ENCODE measurements at regions of chr3 and their contacts with region 1.

Region 1: GRCh38 chr3:139329345-139329850 is 14.4 kb upstream of the MRPS22 start:
- DNase-seq: peak; percentile 91
- H3K4me3 ChIP-seq: no peak overlapping the region
- H3K27ac ChIP-seq: no peak overlapping the region
- H3K4me1 ChIP-seq: peaks cover 3% of the 10 kb centered on the region
- H3K27me3 ChIP-seq: no peaks in the 10 kb centered on the region
- CTCF ChIP-seq: peak; percentile 87 to 96 (median 95)
- POLR2A ChIP-seq: no peak

Region 2: DNA sequence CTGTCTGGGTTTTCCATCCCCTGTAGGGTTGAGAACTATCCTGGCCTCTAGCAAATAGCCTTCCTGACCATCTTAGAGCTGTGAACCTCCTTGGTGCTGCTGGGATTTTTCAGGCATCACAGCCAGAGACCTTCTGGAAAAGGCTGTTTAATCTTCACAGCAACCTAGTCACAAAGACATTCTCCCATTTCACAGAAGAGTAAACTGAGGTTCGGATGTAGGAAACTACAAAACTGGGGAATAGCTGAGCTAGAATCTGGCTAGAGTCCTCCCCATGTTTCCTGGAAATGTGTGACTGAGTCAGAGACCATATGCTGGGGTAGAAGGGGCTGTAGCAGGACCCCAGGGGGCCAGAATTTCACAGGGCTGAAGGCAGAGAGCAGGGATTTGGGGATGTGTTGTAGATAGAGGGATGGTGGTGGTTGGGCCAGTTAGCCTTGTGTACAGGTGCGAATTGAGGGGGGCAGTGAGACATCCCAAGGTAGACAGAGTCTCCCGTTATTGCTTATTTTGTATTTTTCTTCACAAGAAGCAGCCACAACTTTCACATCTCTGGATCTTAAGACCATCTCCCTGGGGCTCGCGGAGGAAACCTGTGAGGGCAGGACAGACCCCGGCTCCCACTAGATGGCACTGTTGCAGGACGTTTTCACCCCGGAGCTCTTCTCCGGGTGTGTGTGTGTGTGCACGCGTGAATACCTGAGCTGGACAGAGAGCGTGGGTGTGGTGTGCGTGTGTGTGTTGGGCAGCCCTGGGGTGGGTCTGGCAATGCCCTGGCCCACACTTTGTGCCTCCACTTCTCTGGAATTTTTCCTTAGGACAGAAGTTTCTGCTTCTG is 217.8 kb before region 1 on chr3:
- intact Hi-C with region 1: loop called (anchors 10 kb)
- DNase-seq: peak; percentile 65
- H3K4me3 ChIP-seq: no peak overlapping the region
- H3K27ac ChIP-seq: no peak overlapping the region
- H3K4me1 ChIP-seq: no peaks in the 10 kb centered on the region
- H3K27me3 ChIP-seq: no peaks in the 10 kb centered on the region
- CTCF ChIP-seq: peak in 2 of 3 experiments; percentile 31 to 50
- POLR2A ChIP-seq: no peak

Region 3: GRCh38 chr3:139506766-139507165 is 177.4 kb after region 1 on chr3:
- intact Hi-C with region 1: no loop called
- DNase-seq: no peak
- H3K4me3 ChIP-seq: no peak overlapping the region
- H3K27ac ChIP-seq: no peak overlapping the region
- H3K4me1 ChIP-seq: no peaks in the 10 kb centered on the region
- H3K27me3 ChIP-seq: no peaks in the 10 kb centered on the region
- CTCF ChIP-seq: no peak
- POLR2A ChIP-seq: no peak